ENCODE measurements at regions of chr12 and their contacts with region 1.

Region 1: DNA sequence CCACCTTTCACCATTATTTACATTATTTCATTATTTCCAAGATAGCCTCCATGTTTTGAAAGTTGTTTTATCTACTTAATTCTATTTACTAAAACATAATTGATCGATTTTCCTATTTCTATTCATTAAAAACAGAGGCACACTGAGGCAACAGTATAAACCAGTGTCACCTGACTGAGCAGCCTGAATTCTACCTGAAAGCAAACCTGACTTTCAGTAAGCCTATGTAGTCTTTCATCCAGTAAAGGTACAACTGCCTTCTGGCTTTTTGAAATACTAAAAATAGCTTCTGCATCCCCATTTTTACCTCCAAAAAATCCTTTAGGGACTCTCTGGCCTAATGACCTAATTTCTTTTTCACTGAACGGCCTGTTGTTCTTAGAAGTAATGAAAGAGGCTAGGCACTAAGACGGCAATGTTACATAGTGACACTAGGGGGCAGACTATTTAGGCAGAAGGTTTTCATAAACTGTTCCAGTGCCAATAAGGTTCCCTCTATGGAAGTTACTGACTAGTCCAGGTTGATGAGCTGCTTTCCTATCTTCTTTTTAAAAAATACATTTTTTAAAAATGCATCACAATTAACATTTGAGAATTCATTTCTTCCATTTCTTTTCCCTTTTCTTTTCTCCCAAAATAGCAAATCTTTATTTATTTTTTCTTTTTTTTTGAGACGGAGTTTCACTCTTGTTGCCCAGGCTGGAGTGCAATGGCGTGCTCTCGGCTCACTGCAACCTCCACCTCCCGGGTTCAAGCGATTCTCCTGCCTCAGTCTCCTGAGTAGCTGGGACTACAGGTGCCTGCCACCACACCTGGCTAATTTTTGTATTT is 17.5 kb downstream of the ANAPC5 start:
- DNase-seq: peak; percentile 74 to 86 (median 85)
- H3K4me3 ChIP-seq: no peak overlapping the region
- H3K27ac ChIP-seq: peak overlapping the region in 1 of 2 experiments; percentile 55
- H3K4me1 ChIP-seq: peaks cover 0 to 3% (median 0%) of the 10 kb centered on the region in 4 experiments
- H3K27me3 ChIP-seq: no peaks in the 10 kb centered on the region

Region 2: DNA sequence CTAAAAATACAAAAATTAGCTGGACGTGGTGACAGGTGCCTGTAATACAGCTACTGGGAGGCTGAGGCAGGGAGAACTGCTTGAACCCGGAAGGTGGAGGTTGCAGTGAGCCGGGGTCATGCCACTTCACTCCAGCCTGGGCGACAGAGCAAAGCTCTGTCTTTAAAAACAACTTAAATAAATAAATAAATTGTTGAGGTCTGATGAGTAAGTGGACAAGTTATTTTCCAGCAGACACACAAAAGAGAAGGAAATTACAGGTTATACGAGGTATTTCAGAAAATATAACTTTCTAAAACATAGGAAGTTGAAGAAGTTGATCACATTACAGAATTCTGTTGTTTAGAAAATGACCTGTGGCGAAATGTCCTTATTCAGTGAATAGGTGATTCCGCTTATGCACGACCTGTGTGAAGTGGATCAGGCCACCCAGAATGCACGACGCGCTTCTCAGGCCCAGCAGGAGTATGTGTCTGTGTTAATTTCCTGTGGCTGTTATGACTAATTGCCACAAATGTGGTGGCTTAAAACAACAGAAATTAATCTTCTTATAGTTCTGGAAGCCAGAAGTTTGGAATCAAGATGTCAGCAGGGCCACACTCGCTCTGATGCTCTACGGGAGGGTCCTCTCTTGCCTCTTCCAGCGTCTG is 164.0 kb before region 1 on chr12:
- CTCF ChIA-PET with region 1: no interaction called
- POLR2A ChIA-PET with region 1: no interaction called
- DNase-seq: peak in 1 of 3 donors; percentile 12
- H3K4me3 ChIP-seq: no peak overlapping the region
- H3K27ac ChIP-seq: no peak overlapping the region
- H3K4me1 ChIP-seq: peaks cover 0 to under 1% (median under 1%) of the 10 kb centered on the region in 4 experiments
- H3K27me3 ChIP-seq: no peaks in the 10 kb centered on the region

Region 3: DNA sequence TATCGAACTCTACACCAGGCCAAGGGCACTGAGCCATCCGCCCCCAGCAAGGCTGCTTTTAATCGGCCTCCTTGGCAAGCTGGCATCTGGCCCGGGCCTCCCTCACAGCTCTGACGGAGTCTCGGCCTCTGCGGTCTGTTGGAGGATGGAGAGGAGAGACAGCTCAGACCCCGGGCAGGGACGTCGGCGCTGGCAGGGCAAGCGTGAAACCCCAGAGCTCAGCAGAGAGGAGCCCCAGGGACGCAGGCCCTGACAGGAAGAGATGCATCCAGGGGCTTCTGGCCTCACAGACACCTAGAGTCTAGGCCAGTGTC is 55.7 kb before region 1 on chr12:
- CTCF ChIA-PET with region 1: no interaction called
- POLR2A ChIA-PET with region 1: no interaction called
- DNase-seq: no peak
- H3K4me3 ChIP-seq: no peak overlapping the region
- H3K27ac ChIP-seq: no peak overlapping the region
- H3K4me1 ChIP-seq: peaks cover 0 to 1% (median 0%) of the 10 kb centered on the region in 4 experiments
- H3K27me3 ChIP-seq: no peaks in the 10 kb centered on the region

Region 4: DNA sequence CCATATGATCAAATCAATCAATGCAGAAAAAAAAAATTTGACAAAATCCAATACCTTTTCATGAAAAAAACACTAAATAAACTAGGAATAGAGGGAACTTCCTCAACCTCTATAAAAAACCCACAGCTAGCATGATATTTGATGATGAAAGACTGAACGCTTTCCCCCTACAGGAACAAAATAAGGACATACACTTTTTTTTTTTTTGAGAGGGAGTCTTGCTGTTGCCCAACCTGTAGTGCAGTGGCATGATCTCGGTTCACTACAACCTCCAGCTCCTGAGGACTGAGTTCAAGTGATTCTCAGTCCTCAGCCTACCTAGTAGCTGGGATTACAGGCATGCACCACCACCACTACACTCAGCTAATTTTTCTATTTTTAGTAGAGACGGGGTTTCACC is 20.3 kb before region 1 on chr12:
- CTCF ChIA-PET with region 1: interaction called, 10 read pairs
- POLR2A ChIA-PET with region 1: no interaction called
- DNase-seq: peak in 1 of 3 donors; percentile 15
- H3K4me3 ChIP-seq: no peak overlapping the region
- H3K27ac ChIP-seq: no peak overlapping the region
- H3K4me1 ChIP-seq: peaks cover 0 to 11% (median 0%) of the 10 kb centered on the region in 4 experiments
- H3K27me3 ChIP-seq: no peaks in the 10 kb centered on the region

Region 5: GRCh38 chr12:121399391-121400331 is 64.9 kb after region 1 on chr12 and contains the start of gene RNF34:
- CTCF ChIA-PET with region 1: interaction called, 10 read pairs
- POLR2A ChIA-PET with region 1: no interaction called
- DNase-seq: peak; percentile 97 to 99 (median 98)
- H3K4me3 ChIP-seq: peak within 1 kb of the TSS; percentile 73 to 97 (median 88)
- H3K27ac ChIP-seq: peak within 1 kb of the TSS; percentile 83 to 87
- H3K4me1 ChIP-seq: peaks cover 18 to 28% (median 18%) of the 10 kb centered on the region in 4 experiments
- H3K27me3 ChIP-seq: no peaks in the 10 kb centered on the region

Region 6: DNA sequence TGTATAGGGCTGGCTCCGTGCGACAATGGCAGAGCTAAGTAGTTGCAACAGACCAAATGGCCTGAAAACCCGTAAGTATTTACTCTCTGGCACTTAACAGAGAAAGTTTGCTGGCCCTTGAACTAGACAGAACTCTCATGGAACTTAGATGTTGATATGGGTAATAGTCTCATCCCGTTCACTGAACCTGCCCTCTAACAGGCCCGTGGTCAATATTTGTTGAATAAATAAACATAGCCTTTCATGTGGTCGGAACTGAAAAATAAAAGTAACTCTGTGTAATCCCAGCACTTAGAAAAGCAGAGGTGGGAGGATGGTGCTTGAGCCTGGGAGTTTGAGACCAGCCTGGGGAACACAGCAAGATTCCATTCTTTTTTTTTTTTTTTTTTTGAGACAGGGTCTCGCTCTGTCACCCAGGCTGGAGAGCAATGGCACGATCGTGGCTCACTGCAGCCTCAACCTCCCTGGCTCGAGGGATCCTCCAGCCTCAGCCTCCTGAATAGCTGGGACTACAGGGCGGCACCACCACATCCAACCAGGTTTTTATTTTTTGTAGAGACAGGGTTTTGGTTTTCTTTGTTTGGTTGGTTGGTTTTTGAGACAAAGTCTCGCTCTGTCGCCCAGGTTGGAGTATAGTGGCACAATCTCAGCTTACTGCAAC is 216.4 kb after region 1 on chr12:
- CTCF ChIA-PET with region 1: no interaction called
- POLR2A ChIA-PET with region 1: no interaction called
- DNase-seq: no peak
- H3K4me3 ChIP-seq: no peak overlapping the region
- H3K27ac ChIP-seq: no peak overlapping the region
- H3K4me1 ChIP-seq: peaks cover 0 to 13% (median 8%) of the 10 kb centered on the region in 4 experiments
- H3K27me3 ChIP-seq: no peaks in the 10 kb centered on the region